HCT116 (cell line): ENCODE measurements at regions of chr3 and their contacts with region 1.

Region 1: GRCh38 chr3:66195347-66195783 is 25.4 kb upstream of the SLC25A26 start:
- DNase-seq: peak; percentile 62
- ATAC-seq: peak; percentile 96
- H3K4me3 ChIP-seq: peak overlapping the region; percentile 29 to 39
- H3K27ac ChIP-seq: no peak overlapping the region
- H3K4me1 ChIP-seq: peaks cover 0 to 14% of the 10 kb centered on the region in 2 experiments; a peak in 2 of 4 replicates
- H3K27me3 ChIP-seq: no peaks in the 10 kb centered on the region
- CTCF ChIP-seq: peak; percentile 34 to 46 (median 36); a peak in 3 of 6 replicates
- POLR2A ChIP-seq: no peak
- RAD21 ChIP-seq: peak; percentile 61

Region 2: DNA sequence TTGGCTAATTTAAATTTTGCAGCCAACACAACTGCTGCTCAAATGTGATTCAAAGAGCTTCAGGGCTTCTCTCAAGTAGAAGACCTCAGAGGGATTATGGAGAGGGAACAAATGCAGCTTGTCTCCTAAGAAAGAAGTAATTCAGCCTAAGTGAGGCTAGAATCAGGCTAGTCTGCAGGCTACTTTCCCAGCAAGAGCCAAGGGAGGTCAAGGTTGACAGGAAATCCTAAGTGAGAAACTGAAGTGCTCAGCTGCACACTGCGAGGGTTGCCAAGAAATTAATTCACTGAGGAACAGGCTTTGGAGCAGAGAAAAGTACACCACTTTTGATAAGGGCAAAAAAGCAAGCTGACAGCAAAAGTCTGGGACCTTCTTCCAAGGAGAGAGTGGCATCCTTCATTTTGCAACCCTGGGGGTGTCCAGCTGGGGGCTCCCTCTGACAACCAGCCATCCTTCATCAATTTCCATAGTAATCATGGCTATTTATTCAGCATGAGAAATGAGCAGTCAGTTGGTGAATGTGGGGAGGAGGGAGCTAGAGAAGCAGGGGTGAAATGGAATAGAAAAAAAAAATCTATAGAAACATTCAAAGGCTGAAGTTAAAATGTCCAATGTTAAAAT is 861.2 kb before region 1 on chr3:
- CTCF ChIA-PET with region 1: interaction called, 4 read pairs
- POLR2A ChIA-PET with region 1: no interaction called
- RAD21 ChIA-PET with region 1: no interaction called
- intact Hi-C with region 1: loop called (anchors 2 kb)
- DNase-seq: no peak
- ATAC-seq: 0 out of 2 replicates have a peak, but pooled peaks have one; percentile 58
- H3K4me3 ChIP-seq: no peak overlapping the region
- H3K27ac ChIP-seq: no peak overlapping the region
- H3K4me1 ChIP-seq: no peaks in the 10 kb centered on the region
- H3K27me3 ChIP-seq: peaks cover 21% of the 10 kb centered on the region
- CTCF ChIP-seq: peak in 2 of 3 experiments; percentile 31 to 36; a peak in 3 of 6 replicates
- POLR2A ChIP-seq: no peak
- RAD21 ChIP-seq: peak; percentile 54

Region 3: GRCh38 chr3:65342084-65342683 is 853.2 kb before region 1 on chr3:
- CTCF ChIA-PET with region 1: interaction called, 3 read pairs
- POLR2A ChIA-PET with region 1: no interaction called
- RAD21 ChIA-PET with region 1: no interaction called
- intact Hi-C with region 1: loop called (anchors 2 kb)
- DNase-seq: peak; percentile 42
- ATAC-seq: peak; percentile 100
- H3K4me3 ChIP-seq: no peak overlapping the region
- H3K27ac ChIP-seq: no peak overlapping the region
- H3K4me1 ChIP-seq: no peaks in the 10 kb centered on the region
- H3K27me3 ChIP-seq: 0 out of 2 replicates have a peak, but pooled peaks cover 6% of the 10 kb centered on the region
- CTCF ChIP-seq: peak; percentile 45 to 87 (median 84); a peak in 5 of 6 replicates
- POLR2A ChIP-seq: no peak
- RAD21 ChIP-seq: peak; percentile 65

Region 4: GRCh38 chr3:65439641-65440284 is 755.6 kb before region 1 on chr3:
- CTCF ChIA-PET with region 1: interaction called, 3 read pairs
- POLR2A ChIA-PET with region 1: no interaction called
- RAD21 ChIA-PET with region 1: interaction called in 1 of 2 experiments, 3 read pairs
- intact Hi-C with region 1: loop called (anchors 5 kb)
- DNase-seq: peak; percentile 6
- ATAC-seq: peak; percentile 92
- H3K4me3 ChIP-seq: no peak overlapping the region
- H3K27ac ChIP-seq: no peak overlapping the region
- H3K4me1 ChIP-seq: no peaks in the 10 kb centered on the region
- H3K27me3 ChIP-seq: no peaks in the 10 kb centered on the region
- CTCF ChIP-seq: peak; percentile 18 to 50 (median 49); a peak in 4 of 6 replicates
- POLR2A ChIP-seq: no peak
- RAD21 ChIP-seq: peak; percentile 53

Region 5: GRCh38 chr3:65785065-65785645 is 410.2 kb before region 1 on chr3:
- CTCF ChIA-PET with region 1: interaction called, 3 read pairs
- POLR2A ChIA-PET with region 1: no interaction called
- RAD21 ChIA-PET with region 1: no interaction called
- intact Hi-C with region 1: loop called (anchors 1 kb)
- DNase-seq: peak; percentile 32
- ATAC-seq: peak; percentile 70
- H3K4me3 ChIP-seq: no peak overlapping the region
- H3K27ac ChIP-seq: no peak overlapping the region
- H3K4me1 ChIP-seq: peaks cover 0 to 3% of the 10 kb centered on the region in 2 experiments; a peak in 1 of 4 replicates
- H3K27me3 ChIP-seq: no peaks in the 10 kb centered on the region
- CTCF ChIP-seq: peak; percentile 60 to 89 (median 66); a peak in 5 of 6 replicates
- POLR2A ChIP-seq: no peak
- RAD21 ChIP-seq: peak; percentile 90

Region 6: GRCh38 chr3:66038726-66039589 is 156.4 kb before region 1 on chr3 and contains the start of gene MAGI1:
- CTCF ChIA-PET with region 1: no interaction called
- POLR2A ChIA-PET with region 1: no interaction called
- RAD21 ChIA-PET with region 1: no interaction called
- intact Hi-C with region 1: loop called (anchors 5 kb)
- DNase-seq: peak; percentile 88
- ATAC-seq: peak; percentile 85
- H3K4me3 ChIP-seq: peak within 1 kb of the TSS; percentile 81 to 91
- H3K27ac ChIP-seq: peak within 1 kb of the TSS; percentile 88
- H3K4me1 ChIP-seq: peaks cover 20 to 25% of the 10 kb centered on the region in 2 experiments
- H3K27me3 ChIP-seq: no peaks in the 10 kb centered on the region
- CTCF ChIP-seq: no peak
- POLR2A ChIP-seq: no peak
- RAD21 ChIP-seq: peak; percentile 40
- total RNA-seq, gene MAGI1: 38.6 TPM

Region 7: GRCh38 chr3:66206806-66207205 is 11.4 kb after region 1 on chr3:
- CTCF ChIA-PET with region 1: interaction called, 6 read pairs
- POLR2A ChIA-PET with region 1: no interaction called
- RAD21 ChIA-PET with region 1: no interaction called
- intact Hi-C with region 1: loop called (anchors 1 kb)
- DNase-seq: no peak
- ATAC-seq: no peak
- H3K4me3 ChIP-seq: no peak overlapping the region
- H3K27ac ChIP-seq: no peak overlapping the region
- H3K4me1 ChIP-seq: no peaks in the 10 kb centered on the region
- H3K27me3 ChIP-seq: peaks cover 7% of the 10 kb centered on the region; the same call in 1 of the 2 replicates
- CTCF ChIP-seq: no peak
- POLR2A ChIP-seq: no peak
- RAD21 ChIP-seq: no peak